ENCODE measurements at regions of chr12 and their contacts with region 1.

Region 1: DNA sequence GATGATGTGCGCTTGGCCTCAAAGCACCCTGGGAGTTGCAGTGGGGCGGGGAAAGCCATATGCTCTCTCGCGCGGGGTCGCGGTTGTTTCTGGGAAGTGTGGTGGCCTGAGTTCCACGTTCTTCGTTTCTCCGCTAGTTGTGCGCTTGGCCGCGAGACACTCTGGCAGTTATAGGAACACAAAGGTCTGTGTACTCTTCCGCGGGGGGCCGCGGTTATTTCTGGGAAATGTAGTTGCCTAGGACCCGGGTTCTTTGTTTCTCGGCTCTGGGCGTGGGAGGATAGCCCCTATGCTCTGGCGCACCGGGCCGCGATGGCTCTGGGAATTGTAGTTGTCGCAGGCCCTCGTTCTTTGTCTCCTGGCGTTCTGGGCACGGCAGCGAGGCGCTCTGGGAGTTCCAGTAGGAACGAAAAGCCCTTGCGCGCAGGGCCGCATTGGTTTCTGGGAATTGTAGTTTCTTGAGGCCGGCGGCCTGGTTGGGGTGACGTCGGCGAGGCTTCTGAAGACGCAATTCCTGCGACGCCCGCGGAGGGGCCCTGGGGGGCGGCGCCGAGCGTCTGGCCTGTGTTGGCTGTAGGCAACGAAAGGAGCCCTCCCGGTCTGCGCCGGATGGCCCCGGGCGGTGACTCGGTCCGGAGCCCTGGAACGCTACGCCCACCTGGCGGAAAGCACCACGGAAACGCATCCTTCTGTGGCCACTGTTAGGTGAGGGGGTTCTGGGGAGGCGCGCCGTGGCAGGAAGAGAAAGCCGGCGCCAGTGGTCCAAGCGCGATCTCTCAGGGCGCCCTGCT is at the start of gene ZNF140:
- DNase-seq: peak; percentile 95 to 98 (median 97)
- H3K4me3 ChIP-seq: peak within 1 kb of the TSS; percentile 59 to 76
- H3K4me3 Mint-ChIP-seq: peak within 1 kb of the TSS in 1 of 8 donors; percentile 17
- H3K27ac ChIP-seq: peak within 1 kb of the TSS; percentile 100
- H3K27ac Mint-ChIP-seq: no peak within 1 kb of the TSS
- H3K4me1 ChIP-seq: peaks cover 13% of the 10 kb centered on the region
- H3K4me1 Mint-ChIP-seq: peaks cover 0 to 10% (median 5%) of the 10 kb centered on the region in 4 donors
- H3K27me3 ChIP-seq: no peaks in the 10 kb centered on the region
- H3K27me3 Mint-ChIP-seq: no peaks in the 10 kb centered on the region
- total RNA-seq, gene ZNF140: 25.2 to 28.2 TPM

Region 2: DNA sequence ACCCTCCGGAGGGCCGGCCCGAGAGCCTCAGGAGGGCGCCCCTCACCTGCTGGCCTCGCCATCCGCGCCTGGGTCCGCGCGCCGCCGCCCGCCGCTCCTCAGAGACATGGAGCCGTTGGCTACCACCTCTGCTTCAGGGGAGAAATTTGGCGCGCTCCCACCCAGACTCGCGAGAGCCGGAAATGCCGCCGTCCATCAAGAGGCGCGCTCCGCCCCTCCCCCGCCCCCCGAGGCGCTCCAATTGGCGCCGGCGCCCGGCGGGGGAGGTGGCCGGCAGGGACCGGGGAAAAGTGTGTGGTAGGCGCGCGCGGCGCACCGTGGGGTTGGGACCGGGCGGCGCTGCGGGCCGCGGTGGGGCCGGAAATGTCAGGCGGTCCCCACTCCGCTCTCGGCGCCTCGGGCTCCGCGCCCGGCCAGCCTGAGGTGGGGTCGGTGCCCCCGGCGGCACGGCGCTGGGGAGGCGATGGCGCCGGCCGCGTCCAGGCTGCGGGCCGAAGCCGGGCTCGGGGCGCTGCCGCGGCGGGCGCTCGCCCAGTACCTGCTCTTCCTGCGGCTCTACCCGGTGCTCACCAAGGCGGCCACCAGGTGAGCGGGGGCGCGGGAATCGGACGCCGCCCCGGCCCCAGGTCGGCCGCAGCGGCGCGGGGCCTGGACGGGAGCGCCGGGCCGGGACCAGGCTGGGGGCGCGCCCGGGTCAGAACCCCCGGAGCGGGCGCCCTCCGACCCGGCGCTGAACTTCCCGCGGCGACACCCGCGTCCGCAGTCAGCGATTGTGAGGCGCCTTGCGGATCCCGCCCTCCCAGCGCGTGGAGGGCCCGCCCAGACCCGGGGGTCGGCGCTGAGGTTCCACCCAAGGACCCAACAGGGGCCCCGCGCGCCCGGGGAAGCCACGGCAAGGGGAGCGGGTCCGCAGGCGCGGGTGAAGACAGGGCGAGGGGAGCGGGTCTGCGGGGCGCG is 393.1 kb before region 1 on chr12 and contains the starts of genes POLE and PXMP2:
- CTCF ChIA-PET with region 1: no interaction called
- POLR2A ChIA-PET with region 1: no interaction called
- intact Hi-C with region 1: loop called (anchors 5 kb)
- DNase-seq: peak; percentile 91 to 93 (median 91)
- H3K4me3 ChIP-seq: peak within 1 kb of the TSS in 1 of 2 donors; percentile 45
- H3K4me3 Mint-ChIP-seq: peak within 1 kb of the TSS; percentile 78 to 90 (median 86)
- H3K27ac ChIP-seq: peak within 1 kb of the TSS; percentile 26
- H3K27ac Mint-ChIP-seq: peak within 1 kb of the TSS in 4 of 7 donors; percentile 47 to 74 (median 62)
- H3K4me1 ChIP-seq: peaks cover 13% of the 10 kb centered on the region
- H3K4me1 Mint-ChIP-seq: peaks cover 15 to 36% (median 20%) of the 10 kb centered on the region in 4 donors
- H3K27me3 ChIP-seq: no peaks in the 10 kb centered on the region
- H3K27me3 Mint-ChIP-seq: no peaks in the 10 kb centered on the region
- total RNA-seq, gene POLE: 69.5 to 75.4 TPM
- total RNA-seq, gene PXMP2: 4.2 to 7.2 TPM

Region 3: DNA sequence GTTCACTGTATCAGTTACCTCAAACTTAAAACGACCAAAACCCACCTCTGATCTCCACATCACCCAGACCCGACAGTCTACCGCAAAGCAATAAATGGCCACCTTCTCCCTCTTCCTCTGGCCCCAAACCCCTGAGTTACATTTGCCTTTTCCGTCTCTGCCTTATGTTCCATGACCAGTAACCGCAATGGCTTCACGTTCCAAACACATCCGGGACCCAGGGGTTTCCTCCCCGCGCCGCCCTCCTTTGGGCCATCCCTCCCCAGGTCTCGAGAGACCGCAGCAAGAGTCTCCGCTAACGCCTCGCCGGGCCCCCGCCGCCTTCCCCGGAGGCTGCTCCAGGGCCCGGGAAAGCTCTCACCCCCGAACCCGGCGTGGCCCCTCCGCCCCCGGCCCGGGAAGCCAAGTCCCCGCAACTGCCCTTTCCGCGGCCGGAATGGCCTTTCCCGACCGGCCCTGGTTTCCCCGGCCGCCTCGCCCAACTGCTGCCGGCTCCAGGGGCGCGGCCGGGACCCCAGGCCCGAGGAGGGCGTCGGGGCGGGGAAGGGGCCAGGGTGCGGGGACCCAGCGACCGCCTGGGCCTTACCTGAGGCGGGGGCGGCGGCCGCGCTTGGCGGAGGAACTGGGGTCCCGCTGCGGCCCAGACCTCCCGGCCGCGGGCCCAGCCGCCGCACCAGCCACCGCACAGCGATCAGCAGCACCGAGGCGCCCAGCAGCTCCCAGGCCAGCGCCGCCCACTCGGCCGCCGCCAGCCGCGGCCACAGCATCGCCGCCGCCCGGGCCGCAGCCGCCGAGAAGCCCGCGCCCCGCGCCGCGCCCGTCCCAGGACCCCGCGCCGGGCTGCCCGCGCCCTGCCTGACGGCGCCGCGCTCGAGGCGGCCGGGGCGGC is 319.3 kb before region 1 on chr12 and contains the start of gene ANKLE2:
- CTCF ChIA-PET with region 1: no interaction called
- POLR2A ChIA-PET with region 1: interaction called, 4 read pairs
- intact Hi-C with region 1: loop called (anchors 1 kb)
- DNase-seq: peak; percentile 68 to 86 (median 70)
- H3K4me3 ChIP-seq: peak within 1 kb of the TSS; percentile 75 to 81
- H3K4me3 Mint-ChIP-seq: peak within 1 kb of the TSS; percentile 82 to 99 (median 93)
- H3K27ac ChIP-seq: peak within 1 kb of the TSS; percentile 89
- H3K27ac Mint-ChIP-seq: peak within 1 kb of the TSS; percentile 95 to 99 (median 97)
- H3K4me1 ChIP-seq: peaks cover 24% of the 10 kb centered on the region
- H3K4me1 Mint-ChIP-seq: peaks cover 14 to 27% (median 22%) of the 10 kb centered on the region in 4 donors
- H3K27me3 ChIP-seq: no peaks in the 10 kb centered on the region
- H3K27me3 Mint-ChIP-seq: no peaks in the 10 kb centered on the region
- total RNA-seq, gene ANKLE2: 95.6 to 101 TPM

Region 4: GRCh38 chr12:132804426-132804861 is 276.1 kb before region 1 on chr12:
- CTCF ChIA-PET with region 1: no interaction called
- POLR2A ChIA-PET with region 1: no interaction called
- intact Hi-C with region 1: no loop called
- DNase-seq: no peak
- H3K4me3 ChIP-seq: no peak overlapping the region
- H3K4me3 Mint-ChIP-seq: no peak overlapping the region
- H3K27ac ChIP-seq: no peak overlapping the region
- H3K27ac Mint-ChIP-seq: no peak overlapping the region
- H3K4me1 ChIP-seq: no peaks in the 10 kb centered on the region
- H3K4me1 Mint-ChIP-seq: peaks cover 0 to 15% (median 7%) of the 10 kb centered on the region in 4 donors
- H3K27me3 ChIP-seq: no peaks in the 10 kb centered on the region
- H3K27me3 Mint-ChIP-seq: no peaks in the 10 kb centered on the region

Region 5: DNA sequence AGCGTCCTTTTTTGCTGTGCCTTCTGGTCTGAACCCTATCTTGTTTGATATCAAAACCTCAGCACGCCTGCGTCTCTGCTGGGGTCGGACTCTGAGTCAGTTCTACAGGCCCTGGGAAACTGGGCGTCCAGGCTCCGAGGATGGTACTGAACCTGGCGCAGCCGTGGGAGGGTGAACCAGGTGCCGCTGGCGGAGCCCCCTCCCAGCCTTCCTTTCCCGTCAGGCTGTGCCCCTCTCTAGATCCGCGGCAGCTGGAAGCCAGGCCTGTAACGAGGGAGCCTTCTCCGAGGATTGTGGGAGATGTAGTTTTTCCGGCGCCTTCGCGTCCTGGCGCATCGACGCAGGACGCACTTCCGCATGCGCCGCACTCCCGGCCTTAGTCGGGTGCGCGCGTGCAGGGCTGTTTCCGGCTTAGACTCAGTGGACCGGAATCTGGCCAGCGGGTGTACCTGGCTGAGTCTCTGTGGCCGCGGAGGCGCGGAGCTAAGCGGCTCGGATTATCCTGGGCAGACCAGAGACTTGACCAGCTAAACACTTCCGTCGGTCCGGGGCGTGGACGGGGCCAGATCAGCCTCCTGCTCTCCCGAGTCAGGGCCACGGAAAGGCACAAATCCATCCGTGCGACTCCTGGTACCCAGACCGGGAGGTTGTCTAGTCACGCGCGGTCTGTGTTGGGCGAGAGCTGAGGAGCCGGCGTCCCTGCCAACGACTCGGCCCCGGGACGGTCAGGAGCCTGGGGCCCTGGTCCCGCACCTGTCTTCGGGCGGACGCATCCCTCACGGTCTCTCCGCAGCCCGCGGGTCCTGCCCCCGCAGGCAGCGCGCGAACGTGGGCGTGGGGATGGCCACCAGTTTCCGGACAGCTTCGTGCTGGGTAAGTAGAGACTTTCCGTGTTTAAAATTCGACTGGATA is 94.3 kb before region 1 on chr12 and contains the start of gene ZNF26:
- CTCF ChIA-PET with region 1: interaction called, 4 read pairs
- POLR2A ChIA-PET with region 1: interaction called, 28 read pairs
- intact Hi-C with region 1: loop called (anchors 1 kb)
- DNase-seq: peak; percentile 85 to 90 (median 86)
- H3K4me3 ChIP-seq: peak within 1 kb of the TSS; percentile 58 to 64
- H3K4me3 Mint-ChIP-seq: peak within 1 kb of the TSS; percentile 92 to 98 (median 95)
- H3K27ac ChIP-seq: peak within 1 kb of the TSS; percentile 77
- H3K27ac Mint-ChIP-seq: peak within 1 kb of the TSS; percentile 95 to 97 (median 97)
- H3K4me1 ChIP-seq: peaks cover 22% of the 10 kb centered on the region
- H3K4me1 Mint-ChIP-seq: peaks cover 24 to 48% (median 33%) of the 10 kb centered on the region in 4 donors
- H3K27me3 ChIP-seq: no peaks in the 10 kb centered on the region
- H3K27me3 Mint-ChIP-seq: peaks cover 0 to 3% of the 10 kb centered on the region in 2 donors
- total RNA-seq, gene ZNF26: 25.9 to 28.2 TPM

Region 6: DNA sequence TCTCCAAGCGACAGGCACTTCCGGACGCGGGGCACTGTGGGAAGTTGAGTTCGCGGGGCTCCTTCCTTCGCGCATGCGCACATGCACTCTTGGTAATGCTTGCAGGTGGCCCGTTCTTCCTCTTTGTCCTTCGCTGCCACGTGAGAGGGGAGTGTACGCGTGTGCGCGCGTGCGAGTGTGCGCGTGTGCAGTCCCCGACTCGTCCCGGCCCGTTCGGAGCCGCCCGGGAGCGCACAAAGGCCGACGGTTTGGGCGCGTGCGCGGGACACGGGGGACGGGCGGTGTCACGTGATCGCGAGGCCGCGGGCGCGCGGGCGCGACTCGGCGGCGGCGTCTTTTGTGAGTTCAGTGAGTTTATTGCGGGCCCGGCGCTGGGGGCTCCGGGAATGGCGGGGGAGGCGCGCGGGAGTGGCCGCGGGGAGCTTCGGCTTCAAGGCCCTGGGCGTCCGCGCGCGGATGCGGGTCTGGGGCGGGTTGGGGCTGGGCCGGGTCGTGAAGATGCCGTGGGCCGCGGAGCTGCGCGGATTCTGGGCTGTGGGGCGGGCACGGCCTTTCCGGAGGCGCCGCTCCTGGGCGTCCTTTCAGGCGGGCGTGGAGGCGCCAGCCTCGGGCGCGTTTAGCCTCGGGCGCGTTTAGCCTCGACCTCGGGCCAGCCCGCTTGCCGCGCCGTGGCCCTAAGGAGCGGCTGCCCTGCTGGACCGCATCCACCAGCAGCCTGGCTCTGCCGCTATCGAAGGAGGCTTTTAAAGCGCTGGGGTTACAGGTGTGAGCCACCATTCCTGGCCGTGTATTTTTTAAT is 43.2 kb before region 1 on chr12 and contains the start of gene ZNF84:
- CTCF ChIA-PET with region 1: no interaction called
- POLR2A ChIA-PET with region 1: interaction called, 14 read pairs
- intact Hi-C with region 1: loop called (anchors 1 kb)
- DNase-seq: peak; percentile 96 to 99 (median 98)
- H3K4me3 ChIP-seq: peak within 1 kb of the TSS in 1 of 2 donors; percentile 54
- H3K4me3 Mint-ChIP-seq: peak within 1 kb of the TSS; percentile 85 to 98 (median 94)
- H3K27ac ChIP-seq: peak within 1 kb of the TSS; percentile 77
- H3K27ac Mint-ChIP-seq: peak within 1 kb of the TSS; percentile 91 to 98 (median 96)
- H3K4me1 ChIP-seq: peaks cover 12% of the 10 kb centered on the region
- H3K4me1 Mint-ChIP-seq: peaks cover 3 to 14% (median 7%) of the 10 kb centered on the region in 4 donors
- H3K27me3 ChIP-seq: no peaks in the 10 kb centered on the region
- H3K27me3 Mint-ChIP-seq: no peaks in the 10 kb centered on the region
- total RNA-seq, gene ZNF84: 42.0 to 46.2 TPM

Region 7: GRCh38 chr12:133106253-133106652 is 25.7 kb after region 1 on chr12:
- CTCF ChIA-PET with region 1: no interaction called
- POLR2A ChIA-PET with region 1: no interaction called
- intact Hi-C with region 1: no loop called
- DNase-seq: no peak
- H3K4me3 ChIP-seq: no peak overlapping the region
- H3K4me3 Mint-ChIP-seq: no peak overlapping the region
- H3K27ac ChIP-seq: no peak overlapping the region
- H3K27ac Mint-ChIP-seq: no peak overlapping the region
- H3K4me1 ChIP-seq: no peaks in the 10 kb centered on the region
- H3K4me1 Mint-ChIP-seq: peaks cover 0 to 1% (median 0%) of the 10 kb centered on the region in 4 donors
- H3K27me3 ChIP-seq: no peaks in the 10 kb centered on the region
- H3K27me3 Mint-ChIP-seq: no peaks in the 10 kb centered on the region

Region 8: GRCh38 chr12:133130038-133130807 is 49.7 kb after region 1 on chr12 and contains the starts of genes ZNF10 and ZNF891:
- CTCF ChIA-PET with region 1: interaction called, 4 read pairs
- POLR2A ChIA-PET with region 1: interaction called, 33 read pairs
- intact Hi-C with region 1: loop called (anchors 1 kb)
- DNase-seq: peak; percentile 95 to 98 (median 98)
- H3K4me3 ChIP-seq: peak within 1 kb of the TSS; percentile 59 to 87
- H3K4me3 Mint-ChIP-seq: peak within 1 kb of the TSS; percentile 87 to 99 (median 95)
- H3K27ac ChIP-seq: peak within 1 kb of the TSS; percentile 98
- H3K27ac Mint-ChIP-seq: peak within 1 kb of the TSS; percentile 92 to 100 (median 99)
- H3K4me1 ChIP-seq: peaks cover 10% of the 10 kb centered on the region
- H3K4me1 Mint-ChIP-seq: peaks cover 11 to 25% (median 19%) of the 10 kb centered on the region in 4 donors
- H3K27me3 ChIP-seq: no peaks in the 10 kb centered on the region
- H3K27me3 Mint-ChIP-seq: no peaks in the 10 kb centered on the region
- total RNA-seq, gene ZNF10: 17.4 to 19.6 TPM
- total RNA-seq, gene ZNF891: 6.2 to 7.3 TPM

Region 9: GRCh38 chr12:133181238-133181959 is 100.8 kb after region 1 on chr12 and contains the start of gene ZNF268:
- CTCF ChIA-PET with region 1: interaction called, 20 read pairs
- POLR2A ChIA-PET with region 1: interaction called, 16 read pairs
- intact Hi-C with region 1: loop called (anchors 1 kb)
- DNase-seq: peak; percentile 84 to 89 (median 85)
- H3K4me3 ChIP-seq: peak within 1 kb of the TSS; percentile 96 to 100
- H3K4me3 Mint-ChIP-seq: peak within 1 kb of the TSS; percentile 89 to 97 (median 94)
- H3K27ac ChIP-seq: peak within 1 kb of the TSS; percentile 73
- H3K27ac Mint-ChIP-seq: peak within 1 kb of the TSS; percentile 91 to 98 (median 96)
- H3K4me1 ChIP-seq: peaks cover 10% of the 10 kb centered on the region
- H3K4me1 Mint-ChIP-seq: peaks cover 19 to 34% (median 23%) of the 10 kb centered on the region in 4 donors
- H3K27me3 ChIP-seq: no peaks in the 10 kb centered on the region
- H3K27me3 Mint-ChIP-seq: no peaks in the 10 kb centered on the region
- total RNA-seq, gene ZNF268: 34.9 to 39.6 TPM